T-cell (primary cell): ENCODE measurements at regions of chr15 and their contacts with region 1.

Region 1: GRCh38 chr15:52289629-52290081 is 5.9 kb downstream of the MYO5C start:
- DNase-seq: no peak
- ATAC-seq: no peak
- H3K4me3 ChIP-seq: no peak overlapping the region
- H3K4me3 Mint-ChIP-seq: no peak overlapping the region
- H3K27ac ChIP-seq: no peak overlapping the region
- H3K27ac Mint-ChIP-seq: no peak overlapping the region
- H3K4me1 ChIP-seq: peaks cover 0 to under 1% of the 10 kb centered on the region in 2 experiments
- H3K4me1 Mint-ChIP-seq: peaks cover 3 to 7% (median 5%) of the 10 kb centered on the region in 3 donors
- H3K27me3 ChIP-seq: peaks cover 0 to 22% of the 10 kb centered on the region in 2 experiments
- H3K27me3 Mint-ChIP-seq: peaks cover 22 to 30% of the 10 kb centered on the region in 2 donors

Region 2: DNA sequence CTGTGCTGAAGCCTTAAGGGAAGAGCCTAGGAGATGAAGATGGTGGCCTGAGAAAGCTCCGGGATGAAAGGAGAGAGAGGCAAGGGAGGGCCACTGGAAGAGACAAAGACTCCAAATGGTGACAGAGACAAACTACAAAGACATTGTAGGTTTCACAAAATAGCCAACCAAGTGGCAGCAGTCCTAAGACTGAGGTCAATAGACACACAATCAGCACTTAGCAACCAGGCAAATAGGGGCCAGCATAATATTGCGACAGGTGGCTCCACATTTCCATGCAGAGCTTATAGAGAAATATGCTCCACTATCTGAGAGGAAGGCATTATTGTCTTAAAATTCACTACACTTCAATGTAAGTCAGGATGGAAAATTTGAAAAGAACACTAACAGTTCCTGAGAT is 28.0 kb after region 1 on chr15:
- CTCF ChIA-PET with region 1: no interaction called
- POLR2A ChIA-PET with region 1: interaction called in 1 of 2 experiments, 12 read pairs
- DNase-seq: no peak
- ATAC-seq: no peak
- H3K4me3 ChIP-seq: no peak overlapping the region
- H3K4me3 Mint-ChIP-seq: no peak overlapping the region
- H3K27ac ChIP-seq: no peak overlapping the region
- H3K27ac Mint-ChIP-seq: no peak overlapping the region
- H3K4me1 ChIP-seq: no peaks in the 10 kb centered on the region
- H3K4me1 Mint-ChIP-seq: no peaks in the 10 kb centered on the region
- H3K27me3 ChIP-seq: no peaks in the 10 kb centered on the region
- H3K27me3 Mint-ChIP-seq: no peaks in the 10 kb centered on the region

Region 3: DNA sequence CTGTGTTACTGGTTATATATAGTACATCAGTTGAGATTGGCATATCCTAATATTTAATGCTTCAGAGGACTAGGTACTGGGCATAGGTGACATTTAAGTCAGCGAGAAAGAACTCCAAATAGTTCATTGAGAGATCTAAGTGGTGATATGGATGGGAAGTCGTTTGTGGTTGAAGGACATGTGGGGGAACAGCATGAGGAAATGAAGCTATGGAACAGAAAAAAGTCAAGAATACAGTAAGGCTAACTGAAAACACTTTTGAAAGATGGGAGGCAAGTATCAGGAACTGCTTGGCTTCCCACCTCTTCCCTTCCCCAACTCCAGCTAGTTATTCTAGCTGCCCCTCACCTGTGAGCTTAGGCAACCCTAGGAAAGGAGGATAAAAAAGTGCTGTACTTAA is 242.8 kb after region 1 on chr15:
- CTCF ChIA-PET with region 1: no interaction called
- POLR2A ChIA-PET with region 1: interaction called in 1 of 2 experiments, 16 read pairs
- DNase-seq: no peak
- ATAC-seq: no peak
- H3K4me3 ChIP-seq: no peak overlapping the region
- H3K4me3 Mint-ChIP-seq: no peak overlapping the region
- H3K27ac ChIP-seq: no peak overlapping the region
- H3K27ac Mint-ChIP-seq: no peak overlapping the region
- H3K4me1 ChIP-seq: peaks cover 5 to 20% of the 10 kb centered on the region in 2 experiments
- H3K4me1 Mint-ChIP-seq: peaks cover 15 to 16% (median 16%) of the 10 kb centered on the region in 3 donors
- H3K27me3 ChIP-seq: peaks cover 0 to 5% of the 10 kb centered on the region in 2 experiments
- H3K27me3 Mint-ChIP-seq: peaks cover 0 to 3% of the 10 kb centered on the region in 2 donors